SK-N-SH (cell line): ENCODE measurements at regions of chr6 and their contacts with region 1.

Region 1: GRCh38 chr6:125906158-125906998 is 50.2 kb upstream of the HINT3 start:
- DNase-seq: peak; percentile 29
- H3K4me3 ChIP-seq: no peak overlapping the region; a peak in 1 of 4 replicates
- H3K27ac ChIP-seq: no peak overlapping the region
- H3K4me1 ChIP-seq: no peaks in the 10 kb centered on the region
- H3K27me3 ChIP-seq: no peaks in the 10 kb centered on the region
- CTCF ChIP-seq: peak; percentile 65
- EP300 ChIP-seq: no peak
- RAD21 ChIP-seq: no peak

Region 2: DNA sequence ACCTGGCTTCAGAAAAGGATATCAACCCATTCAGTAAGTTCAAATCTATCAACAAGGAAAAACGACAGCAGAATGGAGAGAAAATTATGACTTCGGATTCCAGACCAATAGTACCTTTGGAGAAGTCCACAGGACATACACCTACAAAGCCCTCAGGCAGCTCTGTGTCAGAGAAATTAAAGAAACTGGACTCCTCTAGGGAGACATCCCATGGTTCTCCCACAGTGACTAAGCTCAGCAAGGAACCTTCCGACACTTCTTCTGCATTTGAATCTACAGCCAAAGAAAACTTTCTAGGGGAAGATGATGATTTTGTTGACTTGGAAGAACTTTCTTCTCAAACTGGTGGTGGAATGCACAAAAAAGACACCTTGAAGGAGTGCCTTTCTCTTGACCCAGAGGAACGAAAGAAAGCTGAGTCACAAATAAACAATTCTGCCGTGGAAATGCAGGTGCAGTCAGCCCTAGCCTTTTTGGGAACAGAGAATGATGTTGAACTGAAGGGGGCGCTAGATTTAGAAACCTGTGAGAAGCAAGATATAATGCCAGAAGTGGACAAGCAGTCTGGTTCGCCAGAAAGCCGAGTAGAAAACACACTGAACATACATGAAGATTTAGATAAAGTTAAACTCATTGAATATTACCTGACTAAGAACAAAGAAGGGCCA is 17.3 kb before region 1 on chr6:
- CTCF ChIA-PET with region 1: interaction called, 10 read pairs
- POLR2A ChIA-PET with region 1: no interaction called
- DNase-seq: no peak
- H3K4me3 ChIP-seq: no peak overlapping the region
- H3K27ac ChIP-seq: no peak overlapping the region
- H3K4me1 ChIP-seq: peaks cover 0 to 16% of the 10 kb centered on the region in 2 experiments; a peak in 2 of 4 replicates
- H3K27me3 ChIP-seq: no peaks in the 10 kb centered on the region
- CTCF ChIP-seq: peak; percentile 53
- EP300 ChIP-seq: no peak
- RAD21 ChIP-seq: no peak

Region 3: DNA sequence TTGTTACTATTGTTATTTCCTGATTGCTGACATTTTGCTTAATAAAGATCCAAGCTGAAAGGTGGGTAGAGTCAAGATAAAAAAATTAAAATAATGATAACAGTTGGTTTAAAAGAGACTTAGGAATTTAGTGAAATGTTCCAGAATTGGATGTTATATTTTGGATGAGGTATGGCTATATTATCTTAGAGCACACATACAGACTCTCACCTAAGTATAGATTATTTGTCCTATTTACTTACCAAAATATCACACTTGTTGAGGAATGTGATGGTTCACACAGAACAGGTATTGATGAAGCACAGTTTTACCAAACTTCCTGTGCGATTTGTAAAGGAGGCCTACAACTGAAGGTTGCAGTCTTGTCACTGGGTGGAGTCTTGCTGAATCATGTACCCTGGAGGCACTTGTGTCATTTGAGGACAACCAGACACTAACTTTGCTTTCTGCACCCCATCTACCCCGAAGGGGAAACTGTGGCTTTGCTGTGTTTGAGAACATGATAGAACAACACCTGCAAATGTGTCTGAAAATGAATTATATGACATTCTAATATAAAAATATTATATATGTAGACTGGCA is 17.7 kb after region 1 on chr6:
- CTCF ChIA-PET with region 1: interaction called, 13 read pairs
- POLR2A ChIA-PET with region 1: no interaction called
- DNase-seq: no peak
- H3K4me3 ChIP-seq: no peak overlapping the region
- H3K27ac ChIP-seq: no peak overlapping the region
- H3K4me1 ChIP-seq: peaks cover 0 to 11% of the 10 kb centered on the region in 2 experiments; a peak in 2 of 4 replicates
- H3K27me3 ChIP-seq: no peaks in the 10 kb centered on the region
- CTCF ChIP-seq: no peak
- EP300 ChIP-seq: no peak
- RAD21 ChIP-seq: no peak